ENCODE measurements at regions of chr19 and their contacts with region 1.

Region 1: GRCh38 chr19:49451430-49452181 is at the start of gene PIH1D1:
- DNase-seq: peak; percentile 89 to 99
- ATAC-seq: peak; percentile 66 to 77 (median 70)
- H3K4me3 ChIP-seq: peak within 1 kb of the TSS; percentile 95
- H3K4me3 Mint-ChIP-seq: peak within 1 kb of the TSS; percentile 99
- H3K27ac ChIP-seq: peak within 1 kb of the TSS; percentile 99
- H3K27ac Mint-ChIP-seq: peak within 1 kb of the TSS; percentile 98 to 100
- H3K4me1 ChIP-seq: peaks cover 40% of the 10 kb centered on the region
- H3K4me1 Mint-ChIP-seq: peaks cover 44 to 47% of the 10 kb centered on the region in 2 donors
- H3K27me3 ChIP-seq: no peaks in the 10 kb centered on the region
- H3K27me3 Mint-ChIP-seq: no peaks in the 10 kb centered on the region
- CTCF ChIP-seq: no peak
- total RNA-seq, gene PIH1D1: 112 to 149 (median 138) TPM

Region 2: GRCh38 chr19:49468746-49469447 is 17.3 kb after region 1 on chr19:
- intact Hi-C with region 1: loop called (anchors 1 kb)
- DNase-seq: peak; percentile 81 to 97
- ATAC-seq: peak; percentile 64 to 87 (median 72)
- H3K4me3 ChIP-seq: no peak overlapping the region
- H3K4me3 Mint-ChIP-seq: peak overlapping the region; percentile 86
- H3K27ac ChIP-seq: peak overlapping the region; percentile 97
- H3K27ac Mint-ChIP-seq: peak overlapping the region; percentile 92 to 97
- H3K4me1 ChIP-seq: peaks cover 60% of the 10 kb centered on the region
- H3K4me1 Mint-ChIP-seq: peaks cover 21 to 37% of the 10 kb centered on the region in 2 donors
- H3K27me3 ChIP-seq: no peaks in the 10 kb centered on the region
- H3K27me3 Mint-ChIP-seq: no peaks in the 10 kb centered on the region
- CTCF ChIP-seq: no peak

Region 3: GRCh38 chr19:49487277-49488045 is 35.9 kb after region 1 on chr19 and contains the start of gene RPL13A:
- intact Hi-C with region 1: loop called (anchors 1 kb)
- DNase-seq: peak; percentile 99 to 100
- ATAC-seq: peak; percentile 90 to 98 (median 94)
- H3K4me3 ChIP-seq: peak within 1 kb of the TSS; percentile 93
- H3K4me3 Mint-ChIP-seq: peak within 1 kb of the TSS; percentile 95
- H3K27ac ChIP-seq: peak within 1 kb of the TSS; percentile 85
- H3K27ac Mint-ChIP-seq: peak within 1 kb of the TSS; percentile 92 to 98
- H3K4me1 ChIP-seq: peaks cover 43% of the 10 kb centered on the region
- H3K4me1 Mint-ChIP-seq: peaks cover 25 to 29% of the 10 kb centered on the region in 2 donors
- H3K27me3 ChIP-seq: no peaks in the 10 kb centered on the region
- H3K27me3 Mint-ChIP-seq: no peaks in the 10 kb centered on the region
- CTCF ChIP-seq: no peak
- total RNA-seq, gene RPL13A: 1,881 to 2,284 (median 2,283) TPM

Region 4: DNA sequence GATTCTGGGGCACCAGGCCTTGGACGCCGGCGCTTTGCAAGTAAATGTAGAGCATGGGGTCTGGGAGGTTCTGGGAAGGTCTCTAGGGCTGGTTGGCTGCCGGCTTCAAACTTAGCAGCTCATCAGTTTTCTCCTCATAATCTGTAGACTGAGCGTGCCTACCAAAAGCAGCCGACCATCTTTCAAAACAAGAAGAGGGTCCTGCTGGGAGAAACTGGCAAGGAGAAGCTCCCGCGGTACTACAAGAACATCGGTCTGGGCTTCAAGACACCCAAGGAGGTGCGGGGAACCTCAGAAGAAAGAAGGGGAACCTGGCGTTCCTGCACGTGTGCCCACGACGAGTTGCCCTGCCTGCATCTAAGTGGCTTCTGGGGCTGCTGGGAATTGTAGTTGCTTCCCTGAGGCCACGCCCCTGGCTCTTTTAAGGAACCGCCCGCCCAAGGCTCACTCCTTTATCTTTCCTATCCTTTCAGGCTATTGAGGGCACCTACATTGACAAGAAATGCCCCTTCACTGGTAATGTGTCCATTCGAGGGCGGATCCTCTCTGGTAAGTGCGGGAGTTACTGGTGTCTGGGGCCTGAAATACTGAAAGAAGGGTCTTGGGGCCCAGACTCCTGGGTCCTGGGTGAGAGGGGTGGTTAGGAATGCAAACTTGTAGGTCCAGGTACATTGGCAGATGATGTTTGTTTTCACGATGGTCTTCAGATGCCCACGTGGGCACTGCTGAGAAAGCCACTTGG is 45.6 kb after region 1 on chr19:
- intact Hi-C with region 1: loop called (anchors 2 kb)
- DNase-seq: peak; percentile 43 to 91
- ATAC-seq: no peak
- H3K4me3 ChIP-seq: peak overlapping the region; percentile 62
- H3K4me3 Mint-ChIP-seq: peak overlapping the region; percentile 99
- H3K27ac ChIP-seq: peak overlapping the region; percentile 83
- H3K27ac Mint-ChIP-seq: peak overlapping the region; percentile 97 to 98
- H3K4me1 ChIP-seq: peaks cover 83% of the 10 kb centered on the region
- H3K4me1 Mint-ChIP-seq: peaks cover 55 to 69% of the 10 kb centered on the region in 2 donors
- H3K27me3 ChIP-seq: no peaks in the 10 kb centered on the region
- H3K27me3 Mint-ChIP-seq: no peaks in the 10 kb centered on the region
- CTCF ChIP-seq: no peak

Region 5: GRCh38 chr19:49512970-49513745 is 61.6 kb after region 1 on chr19:
- intact Hi-C with region 1: no loop called
- DNase-seq: peak in 1 of 2 donors; percentile 59
- ATAC-seq: peak; percentile 53 to 68 (median 59)
- H3K4me3 ChIP-seq: peak overlapping the region; percentile 56
- H3K4me3 Mint-ChIP-seq: peak overlapping the region; percentile 87
- H3K27ac ChIP-seq: peak overlapping the region; percentile 37
- H3K27ac Mint-ChIP-seq: peak overlapping the region in 1 of 2 donors; percentile 83
- H3K4me1 ChIP-seq: peaks cover 34% of the 10 kb centered on the region
- H3K4me1 Mint-ChIP-seq: peaks cover 24 to 31% of the 10 kb centered on the region in 2 donors
- H3K27me3 ChIP-seq: no peaks in the 10 kb centered on the region
- H3K27me3 Mint-ChIP-seq: peaks cover 0 to 6% of the 10 kb centered on the region in 2 donors
- CTCF ChIP-seq: no peak

Measured in natural killer cell (primary cell).